ENCODE measurements at regions of chr12 and their contacts with region 1.

Region 1: GRCh38 chr12:111006621-111007020 is 86.2 kb upstream of the MYL2 start:
- DNase-seq: no peak
- H3K4me3 ChIP-seq: no peak overlapping the region
- H3K27ac ChIP-seq: no peak overlapping the region
- H3K4me1 ChIP-seq: no peaks in the 10 kb centered on the region
- H3K27me3 ChIP-seq: peaks cover 4% of the 10 kb centered on the region
- CTCF ChIP-seq: no peak

Region 2: GRCh38 chr12:109863847-109864712 is 1142.5 kb before region 1 on chr12:
- CTCF ChIA-PET with region 1: no interaction called
- POLR2A ChIA-PET with region 1: no interaction called
- intact Hi-C with region 1: no loop called
- DNase-seq: no peak
- H3K4me3 ChIP-seq: no peak overlapping the region
- H3K27ac ChIP-seq: no peak overlapping the region
- H3K4me1 ChIP-seq: no peaks in the 10 kb centered on the region
- H3K27me3 ChIP-seq: no peaks in the 10 kb centered on the region
- CTCF ChIP-seq: no peak

Region 3: GRCh38 chr12:110776410-110776809 is 230.2 kb before region 1 on chr12:
- CTCF ChIA-PET with region 1: no interaction called
- POLR2A ChIA-PET with region 1: no interaction called
- intact Hi-C with region 1: no loop called
- DNase-seq: no peak
- H3K4me3 ChIP-seq: no peak overlapping the region
- H3K27ac ChIP-seq: no peak overlapping the region
- H3K4me1 ChIP-seq: no peaks in the 10 kb centered on the region
- H3K27me3 ChIP-seq: no peaks in the 10 kb centered on the region
- CTCF ChIP-seq: no peak

Region 4: GRCh38 chr12:110983806-110984205 is 22.8 kb before region 1 on chr12:
- CTCF ChIA-PET with region 1: interaction called, 5 read pairs
- POLR2A ChIA-PET with region 1: interaction called, 16 read pairs
- intact Hi-C with region 1: no loop called
- DNase-seq: no peak
- H3K4me3 ChIP-seq: no peak overlapping the region
- H3K27ac ChIP-seq: no peak overlapping the region
- H3K4me1 ChIP-seq: no peaks in the 10 kb centered on the region
- H3K27me3 ChIP-seq: no peaks in the 10 kb centered on the region
- CTCF ChIP-seq: no peak